ENCODE measurements at regions of chr12 and their contacts with region 1.

Region 1: DNA sequence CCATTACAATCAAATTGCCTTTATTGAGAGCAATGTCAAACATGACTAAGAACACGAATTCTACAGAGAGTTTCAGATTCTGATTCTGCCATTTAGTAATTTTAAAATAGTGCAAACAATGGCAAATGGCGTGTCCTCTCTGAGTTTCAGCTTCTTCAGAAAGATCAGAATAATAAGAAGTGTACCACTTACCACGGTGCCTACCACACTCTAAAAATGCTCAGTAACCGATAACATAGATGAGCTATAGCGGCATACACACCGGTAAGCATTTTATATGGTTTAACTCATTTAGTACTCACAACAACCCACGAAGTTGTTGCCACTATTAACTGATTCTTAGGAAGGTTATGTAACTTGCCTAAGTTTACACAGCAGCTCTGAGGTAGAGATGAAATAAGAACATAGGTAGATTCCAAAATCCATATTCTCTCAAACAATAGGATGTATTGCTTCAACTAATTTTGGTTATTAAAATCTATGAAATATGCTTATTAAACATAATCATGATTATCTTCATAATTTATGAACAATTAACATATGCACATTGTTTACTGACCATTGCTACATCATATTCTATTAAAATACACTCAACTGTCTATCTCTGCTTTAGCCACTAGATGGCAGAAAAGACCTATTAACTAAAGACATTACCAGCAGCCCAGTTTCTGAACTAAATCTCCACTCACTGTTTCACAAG is 38.3 kb downstream of the SLC6A15 start:
- DNase-seq: no peak
- H3K4me3 Mint-ChIP-seq: no peak overlapping the region
- H3K27ac Mint-ChIP-seq: no peak overlapping the region
- H3K4me1 Mint-ChIP-seq: no peaks in the 10 kb centered on the region
- H3K27me3 Mint-ChIP-seq: no peaks in the 10 kb centered on the region
- CTCF ChIP-seq: peak; percentile 36

Region 2: GRCh38 chr12:84891106-84891838 is 17.0 kb after region 1 on chr12:
- CTCF ChIA-PET with region 1: no interaction called
- intact Hi-C with region 1: no loop called
- DNase-seq: no peak
- H3K4me3 Mint-ChIP-seq: no peak overlapping the region
- H3K27ac Mint-ChIP-seq: no peak overlapping the region
- H3K4me1 Mint-ChIP-seq: no peaks in the 10 kb centered on the region
- H3K27me3 Mint-ChIP-seq: no peaks in the 10 kb centered on the region
- CTCF ChIP-seq: no peak

Region 3: GRCh38 chr12:85029456-85029855 is 155.2 kb after region 1 on chr12:
- CTCF ChIA-PET with region 1: interaction called, 26 read pairs
- intact Hi-C with region 1: loop called (anchors 1 kb)
- DNase-seq: no peak
- H3K4me3 Mint-ChIP-seq: no peak overlapping the region
- H3K27ac Mint-ChIP-seq: no peak overlapping the region
- H3K4me1 Mint-ChIP-seq: no peaks in the 10 kb centered on the region
- H3K27me3 Mint-ChIP-seq: no peaks in the 10 kb centered on the region
- CTCF ChIP-seq: no peak

Region 4: DNA sequence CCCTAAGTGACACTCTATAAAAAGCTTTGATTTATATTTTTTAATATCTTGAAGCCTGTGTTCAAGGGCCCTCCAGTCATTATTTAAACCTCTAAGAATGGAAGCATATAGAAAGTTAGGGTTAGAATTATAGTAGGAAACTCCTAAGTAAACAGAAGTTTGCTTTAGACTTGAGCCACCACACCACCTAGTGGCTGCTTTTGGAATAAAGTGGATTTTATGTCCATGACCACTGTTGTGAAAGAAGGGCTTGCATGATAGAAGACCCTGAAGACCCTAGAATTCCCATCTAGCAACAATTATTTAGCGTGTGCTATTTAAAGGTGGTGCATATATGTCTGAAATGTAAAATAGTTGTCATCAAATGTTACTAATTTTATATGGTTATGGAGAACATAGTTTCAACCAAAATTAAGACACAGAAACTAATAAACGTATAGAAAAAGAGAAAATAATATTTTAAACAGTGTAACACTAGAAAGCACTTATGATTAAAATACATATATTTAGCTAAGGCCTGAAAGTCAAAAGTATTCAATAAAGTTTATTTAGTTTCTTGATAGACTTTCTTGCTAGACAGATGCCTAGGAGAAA is 183.2 kb after region 1 on chr12:
- CTCF ChIA-PET with region 1: no interaction called
- intact Hi-C with region 1: loop called (anchors 1 kb)
- DNase-seq: peak; percentile 61
- H3K4me3 Mint-ChIP-seq: no peak overlapping the region
- H3K27ac Mint-ChIP-seq: no peak overlapping the region
- H3K4me1 Mint-ChIP-seq: no peaks in the 10 kb centered on the region
- H3K27me3 Mint-ChIP-seq: no peaks in the 10 kb centered on the region
- CTCF ChIP-seq: peak; percentile 69

Region 5: DNA sequence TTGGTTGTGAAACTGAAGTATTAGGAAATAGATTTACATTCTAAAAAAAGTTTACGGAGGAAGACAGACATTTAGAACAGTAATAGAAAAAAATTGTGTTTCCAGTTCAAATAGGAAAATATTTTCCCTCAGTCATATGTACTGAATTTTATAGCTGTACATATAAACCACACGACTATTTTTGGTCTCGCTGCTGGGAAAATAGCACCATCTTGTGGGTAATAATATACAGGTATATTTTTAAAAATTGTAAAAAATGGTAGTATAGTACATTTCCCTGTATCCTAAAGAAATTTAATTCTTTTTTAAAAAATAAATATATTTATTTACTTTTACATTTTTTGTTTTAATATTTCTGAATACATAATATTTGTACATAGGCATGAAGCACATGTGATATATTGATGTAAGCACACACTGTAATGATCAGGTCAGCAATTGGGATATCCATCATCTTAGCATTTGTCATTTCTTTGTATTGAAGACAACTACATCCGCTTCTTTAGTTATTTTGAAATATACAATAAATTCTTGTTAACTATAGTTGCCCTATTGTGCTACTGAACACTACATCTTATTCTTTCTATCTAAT is 574.4 kb after region 1 on chr12:
- CTCF ChIA-PET with region 1: no interaction called
- intact Hi-C with region 1: loop called (anchors 10 kb)
- DNase-seq: no peak
- H3K4me3 Mint-ChIP-seq: no peak overlapping the region
- H3K27ac Mint-ChIP-seq: no peak overlapping the region
- H3K4me1 Mint-ChIP-seq: peaks cover 13% of the 10 kb centered on the region
- H3K27me3 Mint-ChIP-seq: no peaks in the 10 kb centered on the region
- CTCF ChIP-seq: peak; percentile 33